HepG2 (cell line): ENCODE measurements at regions of chr13 and their contacts with region 1.

Region 1: DNA sequence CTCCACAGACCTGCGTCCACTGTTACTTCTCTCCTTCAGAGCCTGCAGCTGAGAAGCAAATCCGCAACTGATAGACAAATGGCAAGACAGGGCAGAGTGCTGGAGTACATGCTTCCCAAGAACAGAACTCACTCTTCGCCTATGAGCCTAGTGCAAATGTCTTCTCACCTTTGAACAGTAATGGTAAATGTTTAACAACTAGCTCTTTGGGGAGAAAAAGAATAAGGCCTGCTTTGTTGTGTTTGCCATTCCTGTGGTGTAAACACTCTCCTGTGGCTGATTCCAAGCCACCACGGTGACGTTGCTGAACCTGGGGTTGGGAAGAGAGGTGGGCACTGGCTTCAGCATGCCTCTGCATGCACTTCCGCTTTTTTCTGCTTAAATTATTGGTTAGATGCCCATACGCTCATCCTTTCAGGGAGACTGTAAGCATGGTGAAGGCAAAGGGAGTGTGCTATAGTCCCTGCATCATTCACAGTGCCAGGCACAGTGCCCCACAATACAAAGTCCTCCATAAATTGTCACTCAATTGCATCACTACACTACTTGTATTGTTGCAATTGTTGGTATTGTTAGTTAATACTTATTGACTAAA is 28.1 kb upstream of the GTF3A start:
- DNase-seq: peak; percentile 95
- ATAC-seq: peak; percentile 98
- H3K4me3 ChIP-seq: peak overlapping the region; percentile 18 to 53 (median 19); a peak in 4 of 6 replicates
- H3K27ac ChIP-seq: peak overlapping the region; percentile 95
- H3K4me1 ChIP-seq: peaks cover 39% of the 10 kb centered on the region
- H3K27me3 ChIP-seq: no peaks in the 10 kb centered on the region
- CTCF ChIP-seq: peak; percentile 21; the same call in 1 of the 2 replicates
- EP300 ChIP-seq: peak in 1 of 2 experiments; percentile 69; a peak in 2 of 4 replicates
- POLR2A ChIP-seq: peak; percentile 87 to 96
- RAD21 ChIP-seq: no peak

Region 2: GRCh38 chr13:27379694-27380641 is 16.4 kb before region 1 on chr13:
- CTCF ChIA-PET with region 1: no interaction called
- POLR2A ChIA-PET with region 1: interaction called, 28 read pairs
- in situ Hi-C with region 1: no loop called
- intact Hi-C with region 1: no loop called
- DNase-seq: peak; percentile 60
- ATAC-seq: peak; percentile 69
- H3K4me3 ChIP-seq: peak overlapping the region in 2 of 3 experiments; percentile 45; a peak in 4 of 6 replicates
- H3K27ac ChIP-seq: no peak overlapping the region
- H3K4me1 ChIP-seq: peaks cover 68% of the 10 kb centered on the region
- H3K27me3 ChIP-seq: no peaks in the 10 kb centered on the region
- CTCF ChIP-seq: peak; percentile 89
- EP300 ChIP-seq: no peak
- POLR2A ChIP-seq: no peak
- RAD21 ChIP-seq: peak; percentile 78

Region 3: DNA sequence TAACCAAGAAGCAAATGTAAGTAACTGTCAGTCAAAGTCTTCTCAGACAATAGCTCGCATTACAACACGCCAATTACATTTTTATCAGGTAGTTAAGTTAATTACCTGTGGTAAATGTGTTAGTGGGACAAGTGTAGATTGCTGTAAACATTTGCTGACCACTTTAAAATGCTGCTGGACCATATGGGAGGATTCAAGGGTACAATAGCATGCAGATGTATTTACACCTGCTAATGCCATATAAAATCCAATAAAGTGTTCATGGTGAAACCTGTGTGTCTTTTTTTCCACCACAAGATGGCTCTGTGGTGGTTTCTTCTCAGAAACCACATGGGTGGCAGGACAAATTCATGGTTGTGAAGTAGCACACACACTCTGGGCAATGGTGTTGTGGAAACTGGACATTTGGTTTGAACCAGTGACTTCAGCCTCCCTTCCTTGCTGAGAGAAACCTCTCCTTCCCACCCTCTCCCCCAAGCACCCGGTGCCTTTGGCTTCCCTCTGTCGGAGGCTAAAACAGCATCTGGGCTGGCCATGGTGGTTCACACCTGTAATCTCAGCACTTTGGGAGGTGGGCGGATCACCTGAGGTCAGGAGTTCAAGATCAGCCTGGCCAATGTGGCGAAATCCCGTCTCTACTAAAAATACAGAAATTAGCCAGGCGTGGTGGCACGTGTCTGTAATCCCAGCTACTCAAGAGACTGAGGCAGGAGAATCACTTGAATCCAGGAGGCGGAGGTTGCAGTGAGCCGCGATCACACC is 10.0 kb after region 1 on chr13:
- CTCF ChIA-PET with region 1: no interaction called
- POLR2A ChIA-PET with region 1: interaction called, 14 read pairs
- in situ Hi-C with region 1: no loop called
- intact Hi-C with region 1: no loop called
- DNase-seq: peak; percentile 43
- ATAC-seq: no peak
- H3K4me3 ChIP-seq: no peak overlapping the region
- H3K27ac ChIP-seq: no peak overlapping the region
- H3K4me1 ChIP-seq: peaks cover 59% of the 10 kb centered on the region
- H3K27me3 ChIP-seq: no peaks in the 10 kb centered on the region
- CTCF ChIP-seq: peak; percentile 64
- EP300 ChIP-seq: no peak
- POLR2A ChIP-seq: no peak
- RAD21 ChIP-seq: peak; percentile 35; the same call in 1 of the 2 replicates

Region 4: GRCh38 chr13:27424246-27425157 is 28.2 kb after region 1 on chr13 and contains the start of gene GTF3A:
- CTCF ChIA-PET with region 1: no interaction called
- POLR2A ChIA-PET with region 1: interaction called, 16 read pairs
- in situ Hi-C with region 1: no loop called
- intact Hi-C with region 1: no loop called
- DNase-seq: peak; percentile 59
- ATAC-seq: peak; percentile 82
- H3K4me3 ChIP-seq: peak within 1 kb of the TSS; percentile 51 to 74 (median 56)
- H3K27ac ChIP-seq: peak within 1 kb of the TSS; percentile 77
- H3K4me1 ChIP-seq: peaks cover 51% of the 10 kb centered on the region
- H3K27me3 ChIP-seq: no peaks in the 10 kb centered on the region
- CTCF ChIP-seq: 0 out of 2 replicates have a peak, but pooled peaks have one; percentile 1
- EP300 ChIP-seq: no peak
- POLR2A ChIP-seq: peak; percentile 67 to 88; a peak in 3 of 4 replicates
- RAD21 ChIP-seq: peak; percentile 59; the same call in 1 of the 2 replicates
- total RNA-seq, gene GTF3A: 122 and 176 TPM in 2 replicates

Region 5: DNA sequence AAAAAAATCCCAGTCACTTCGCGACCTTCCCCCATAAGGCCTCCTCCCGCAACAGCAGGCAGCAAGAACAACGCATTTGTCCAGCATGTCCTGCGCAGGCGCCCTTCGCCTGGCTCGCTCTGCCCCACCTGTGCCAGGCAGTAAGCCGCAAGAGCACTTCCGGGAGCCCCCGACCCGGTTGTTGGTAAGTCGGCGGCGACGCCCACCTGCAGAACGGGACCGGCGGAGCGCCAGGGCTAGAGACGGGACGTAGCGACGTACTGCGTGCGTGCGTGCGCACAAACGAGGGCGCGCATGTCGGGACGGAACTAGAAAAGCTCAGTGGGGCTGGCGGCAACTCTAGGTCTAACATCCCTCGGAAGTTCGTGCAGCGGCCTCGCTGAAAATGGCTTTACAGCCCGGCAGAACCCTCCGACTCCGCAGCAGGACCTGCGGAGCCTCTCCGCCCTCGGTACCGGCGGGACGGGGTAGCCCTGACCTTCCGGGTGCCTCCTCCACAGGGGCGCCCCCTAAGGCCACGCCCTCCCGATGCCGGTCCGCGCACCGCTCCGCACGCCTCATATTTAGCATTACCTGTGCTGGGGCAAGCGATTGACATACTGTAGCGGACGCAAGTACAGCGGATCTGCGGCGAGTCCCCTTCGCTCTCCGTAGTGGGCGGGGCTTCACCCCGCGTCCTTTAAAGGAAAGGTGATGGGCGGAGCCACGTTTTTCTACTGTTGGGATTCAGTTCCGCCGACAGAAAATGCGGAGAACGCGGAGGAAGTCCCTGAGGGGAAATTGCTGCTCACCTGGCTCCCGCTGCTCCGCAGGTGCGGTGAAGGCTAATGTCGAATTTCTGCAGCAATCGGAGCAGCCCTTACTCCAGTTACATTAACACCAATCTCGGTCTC is 53.8 kb after region 1 on chr13 and contains the start of gene MTIF3:
- CTCF ChIA-PET with region 1: no interaction called
- POLR2A ChIA-PET with region 1: interaction called, 12 read pairs
- in situ Hi-C with region 1: no loop called
- intact Hi-C with region 1: no loop called
- DNase-seq: peak; percentile 94
- ATAC-seq: peak; percentile 96
- H3K4me3 ChIP-seq: peak within 1 kb of the TSS; percentile 67 to 89 (median 74)
- H3K27ac ChIP-seq: peak within 1 kb of the TSS; percentile 95
- H3K4me1 ChIP-seq: peaks cover 36% of the 10 kb centered on the region
- H3K27me3 ChIP-seq: no peaks in the 10 kb centered on the region; a peak in 1 of 5 replicates
- CTCF ChIP-seq: peak; percentile 40
- EP300 ChIP-seq: 0 out of 4 replicates have a peak, but pooled peaks of 1 of the 2 experiments have one; percentile 28
- POLR2A ChIP-seq: peak; percentile 75 to 97
- RAD21 ChIP-seq: no peak
- total RNA-seq, gene MTIF3: 40.6 and 59.2 TPM in 2 replicates

Region 6: DNA sequence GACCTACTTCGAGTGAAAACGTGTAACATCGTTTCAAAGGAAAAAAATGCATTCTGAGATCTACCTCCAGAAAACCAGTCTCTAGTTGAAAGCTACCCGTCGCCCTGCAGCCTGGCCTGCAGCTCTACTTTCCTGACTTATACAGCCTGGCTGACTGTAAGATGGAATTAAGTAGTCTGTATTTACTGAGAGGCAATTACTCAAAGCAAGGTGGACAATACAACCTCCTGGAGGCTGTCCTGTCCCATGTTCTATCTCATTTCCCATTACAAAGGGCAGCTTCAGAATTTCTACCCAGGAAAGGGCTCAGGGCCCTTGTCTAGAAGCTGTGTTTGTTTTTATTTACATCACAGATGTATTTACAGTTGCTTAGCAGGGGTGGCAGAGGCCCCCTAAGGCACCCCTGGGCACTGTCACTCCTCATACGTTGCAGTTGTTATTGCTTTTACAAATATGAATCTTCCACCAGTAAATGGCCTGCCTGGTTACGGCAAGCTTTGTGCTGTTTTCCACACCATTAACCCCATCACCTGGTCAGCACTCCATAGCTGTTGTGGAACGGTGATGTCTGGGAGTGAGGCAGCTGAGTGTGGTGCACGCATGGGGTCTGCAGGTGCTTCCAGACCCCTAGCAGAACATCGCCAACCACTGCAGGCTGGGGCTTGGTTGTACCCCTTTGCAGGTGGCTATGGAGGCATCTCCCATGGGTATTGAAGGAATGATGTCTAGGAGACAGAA is 100.4 kb after region 1 on chr13:
- CTCF ChIA-PET with region 1: no interaction called
- POLR2A ChIA-PET with region 1: no interaction called
- in situ Hi-C with region 1: no loop called
- intact Hi-C with region 1: no loop called
- DNase-seq: no peak
- ATAC-seq: no peak
- H3K4me3 ChIP-seq: no peak overlapping the region
- H3K27ac ChIP-seq: no peak overlapping the region
- H3K4me1 ChIP-seq: no peaks in the 10 kb centered on the region
- H3K27me3 ChIP-seq: peaks cover 1 to 2% of the 10 kb centered on the region in 2 experiments; a peak in 2 of 5 replicates
- CTCF ChIP-seq: no peak
- EP300 ChIP-seq: no peak
- POLR2A ChIP-seq: no peak
- RAD21 ChIP-seq: no peak

Region 7: GRCh38 chr13:27620377-27621115 is 224.2 kb after region 1 on chr13 and contains the start of gene LNX2:
- CTCF ChIA-PET with region 1: no interaction called
- POLR2A ChIA-PET with region 1: interaction called, 12 read pairs
- in situ Hi-C with region 1: no loop called
- intact Hi-C with region 1: no loop called
- DNase-seq: peak; percentile 91
- ATAC-seq: peak; percentile 94
- H3K4me3 ChIP-seq: peak within 1 kb of the TSS; percentile 79 to 95 (median 91)
- H3K27ac ChIP-seq: peak within 1 kb of the TSS; percentile 91
- H3K4me1 ChIP-seq: peaks cover 62% of the 10 kb centered on the region
- H3K27me3 ChIP-seq: no peaks in the 10 kb centered on the region; a peak in 1 of 5 replicates
- CTCF ChIP-seq: peak; percentile 10; the same call in 1 of the 2 replicates
- EP300 ChIP-seq: no peak
- POLR2A ChIP-seq: peak in 1 of 2 experiments; percentile 64; a peak in 3 of 4 replicates
- RAD21 ChIP-seq: 0 out of 2 replicates have a peak, but pooled peaks have one; percentile 64
- total RNA-seq, gene LNX2: 9.7 and 13.1 TPM in 2 replicates